Posterior vena cava (tissue), 2 donors: ENCODE measurements at regions of chr5 and their contacts with region 1.

Region 1: GRCh38 chr5:78805474-78806124 is 157.0 kb upstream of the LHFPL2 start:
- DNase-seq: no peak

Region 2: GRCh38 chr5:78747705-78748359 is 57.8 kb before region 1 on chr5:
- intact Hi-C with region 1: no loop called
- DNase-seq: no peak

Region 3: GRCh38 chr5:78765756-78766411 is 39.7 kb before region 1 on chr5:
- intact Hi-C with region 1: loop called in 1 of 2 experiments (anchors 2 kb)
- DNase-seq: no peak

Region 4: DNA sequence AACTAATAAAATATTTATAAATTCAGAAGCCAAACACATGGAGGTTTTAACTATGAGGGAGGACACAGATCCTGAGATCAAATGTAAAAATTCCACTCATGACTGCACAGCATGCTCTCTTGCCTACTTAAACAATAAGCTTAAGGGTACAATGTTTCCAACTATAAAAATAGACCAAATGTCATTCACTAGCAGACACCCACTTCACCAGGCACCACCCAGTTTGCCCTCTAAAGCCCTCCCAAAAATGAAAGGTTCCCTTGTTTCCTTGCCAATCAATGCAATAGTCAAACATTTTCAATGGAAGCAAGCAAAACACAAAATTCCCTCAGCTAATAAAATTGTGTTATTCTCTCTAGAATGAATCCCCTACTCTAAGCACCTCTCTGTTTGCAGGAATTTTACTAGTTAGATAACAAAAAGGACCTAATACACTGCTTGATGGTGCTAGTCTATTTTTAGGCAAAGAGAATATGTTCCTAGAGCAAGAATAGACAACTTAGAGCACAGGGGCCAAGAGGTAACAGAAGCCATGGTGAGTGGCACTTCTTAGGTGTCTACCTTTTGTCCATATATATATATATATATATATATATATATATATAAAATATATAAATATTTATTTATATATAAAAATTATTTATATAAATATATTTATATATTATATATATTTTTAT is 573.0 kb after region 1 on chr5:
- intact Hi-C with region 1: no loop called
- DNase-seq: no peak